ENCODE measurements at regions of chr3 and their contacts with region 1.

Region 1: DNA sequence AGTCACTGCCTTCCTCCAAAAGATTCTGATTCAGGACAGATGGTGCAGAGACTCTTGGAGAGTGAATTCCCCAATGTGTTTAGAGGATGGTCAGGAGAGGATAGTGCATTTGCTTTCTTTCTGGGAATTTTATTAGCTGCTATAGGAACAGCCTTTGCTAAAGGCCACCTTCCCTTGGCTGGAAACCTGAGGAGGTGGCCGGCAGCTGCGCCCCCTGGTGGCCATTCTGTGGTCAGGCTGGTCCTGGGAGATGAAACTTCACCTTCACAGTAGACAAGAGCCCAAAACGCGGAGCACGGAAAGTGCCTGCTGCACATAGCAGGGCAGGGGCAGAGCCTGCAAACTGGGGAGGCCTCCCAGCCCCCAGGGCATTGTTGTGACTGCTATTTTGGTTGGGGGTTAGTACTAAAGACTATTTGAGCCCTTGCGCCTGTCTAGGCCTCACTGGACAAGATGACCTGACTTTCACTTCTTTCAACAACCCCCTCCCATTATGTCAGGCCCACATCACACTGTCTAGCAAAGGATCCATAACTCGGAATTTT is 34.3 kb downstream of the SEC22C start:
- DNase-seq: peak in 1 of 2 donors; percentile 45
- ATAC-seq: peak; percentile 48 to 82
- H3K4me3 ChIP-seq: no peak overlapping the region
- H3K27ac ChIP-seq: peak overlapping the region in 3 of 4 donors; percentile 20 to 48 (median 47)
- H3K4me1 ChIP-seq: peaks cover 0 to 5% of the 10 kb centered on the region in 2 donors
- H3K27me3 ChIP-seq: no peaks in the 10 kb centered on the region
- CTCF ChIP-seq: peak; percentile 63 to 97 (median 84)
- POLR2A ChIP-seq: no peak

Region 2: DNA sequence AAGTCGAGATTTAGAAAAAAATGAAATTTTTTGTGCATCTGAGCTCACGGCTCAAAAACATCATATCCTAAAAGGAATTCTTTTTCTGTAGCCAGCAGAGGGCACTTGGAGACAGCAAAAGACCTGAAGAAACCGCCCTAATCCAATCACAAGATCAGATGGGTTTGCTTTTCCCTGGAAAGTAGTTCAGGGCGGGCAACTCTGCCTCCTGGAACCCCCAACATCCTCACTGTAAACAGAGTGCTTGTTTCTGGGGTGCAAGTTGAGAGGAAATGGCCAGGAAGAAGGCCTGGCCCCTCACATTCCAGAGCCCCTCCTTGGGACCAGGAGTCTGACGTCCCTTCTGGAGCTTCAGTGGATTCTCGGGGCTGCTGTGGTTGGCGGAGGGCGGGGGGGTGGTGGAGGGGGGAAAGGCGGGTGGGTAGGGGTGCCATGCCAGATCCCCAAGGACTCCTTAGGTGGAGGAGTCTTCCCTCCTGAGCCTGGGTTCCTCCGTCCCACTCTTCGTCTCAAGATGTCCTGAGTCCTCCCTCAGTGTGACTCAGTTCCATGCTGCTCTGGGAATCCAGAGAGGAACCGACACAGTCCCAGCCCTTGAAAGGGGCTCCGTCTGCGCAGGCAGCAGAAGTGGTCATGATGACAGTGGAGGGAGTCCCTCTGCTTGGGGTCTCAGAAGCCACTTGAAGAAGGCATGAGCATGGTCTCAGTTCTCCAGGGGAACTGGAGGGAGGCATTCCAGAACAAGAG is 317.4 kb before region 1 on chr3:
- in situ Hi-C with region 1: loop called (anchors 5 to 25 kb)
- intact Hi-C with region 1: no loop called
- DNase-seq: no peak
- ATAC-seq: no peak
- H3K4me3 ChIP-seq: no peak overlapping the region
- H3K27ac ChIP-seq: no peak overlapping the region
- H3K4me1 ChIP-seq: peaks cover 18 to 20% of the 10 kb centered on the region in 2 donors
- H3K27me3 ChIP-seq: no peaks in the 10 kb centered on the region
- CTCF ChIP-seq: peak; percentile 38 to 61 (median 58)
- POLR2A ChIP-seq: no peak

Region 3: GRCh38 chr3:42236611-42237010 is 310.9 kb before region 1 on chr3:
- in situ Hi-C with region 1: loop called in 3 of 4 experiments (anchors 5 to 25 kb)
- intact Hi-C with region 1: no loop called
- DNase-seq: no peak
- ATAC-seq: no peak
- H3K4me3 ChIP-seq: no peak overlapping the region
- H3K27ac ChIP-seq: no peak overlapping the region
- H3K4me1 ChIP-seq: no peaks in the 10 kb centered on the region
- H3K27me3 ChIP-seq: no peaks in the 10 kb centered on the region
- CTCF ChIP-seq: no peak
- POLR2A ChIP-seq: no peak

Region 4: GRCh38 chr3:42247576-42248027 is 299.9 kb before region 1 on chr3:
- in situ Hi-C with region 1: loop called in 2 of 4 experiments (anchors 25 kb)
- intact Hi-C with region 1: no loop called
- DNase-seq: peak in 1 of 2 donors; percentile 30
- ATAC-seq: peak in 1 of 2 donors; percentile 58
- H3K4me3 ChIP-seq: no peak overlapping the region
- H3K27ac ChIP-seq: no peak overlapping the region
- H3K4me1 ChIP-seq: no peaks in the 10 kb centered on the region
- H3K27me3 ChIP-seq: no peaks in the 10 kb centered on the region
- CTCF ChIP-seq: peak; percentile 29 to 63 (median 60)
- POLR2A ChIP-seq: no peak

Region 5: DNA sequence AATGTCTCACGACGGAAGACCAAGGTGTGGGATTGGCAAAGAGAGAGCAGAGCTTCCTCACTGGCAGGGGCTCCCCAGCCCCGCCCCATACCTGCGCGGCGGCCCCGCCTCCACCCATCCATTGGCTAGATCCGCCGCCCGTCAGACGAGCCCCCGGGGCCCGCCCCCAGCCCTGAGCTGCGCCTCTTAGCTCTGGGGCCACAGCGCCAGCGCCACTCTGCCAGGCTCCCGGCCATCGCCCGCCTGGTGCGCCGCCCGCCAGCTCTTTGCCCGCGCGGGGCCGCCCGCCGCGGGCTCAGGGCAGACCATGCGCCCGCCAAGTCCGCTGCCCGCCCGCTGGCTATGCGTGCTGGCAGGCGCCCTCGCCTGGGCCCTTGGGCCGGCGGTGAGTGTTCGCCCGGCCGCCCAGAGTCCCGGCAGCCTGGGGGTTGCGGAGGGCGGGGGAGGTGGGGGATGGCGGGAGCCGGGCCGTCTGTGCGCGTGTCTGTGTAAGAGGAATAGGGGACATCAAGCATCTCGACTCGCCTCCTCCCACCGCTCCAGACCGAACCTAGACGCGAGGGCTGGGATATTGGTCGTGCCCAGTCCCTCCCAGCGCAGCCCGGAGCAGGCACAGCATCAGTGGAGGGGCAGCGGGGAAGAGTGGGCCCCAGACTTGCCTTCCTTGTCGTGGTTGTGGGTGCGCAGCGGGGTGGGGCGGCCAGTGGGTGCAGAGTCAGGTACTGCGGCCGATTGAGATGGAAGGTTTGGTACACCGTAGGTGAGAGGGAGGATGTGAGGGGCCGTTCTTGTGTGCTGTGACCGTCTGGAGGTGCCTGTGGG is 44.8 kb before region 1 on chr3 and contains the start of gene VIPR1:
- in situ Hi-C with region 1: no loop called
- intact Hi-C with region 1: loop called (anchors 5 kb)
- DNase-seq: peak in 1 of 2 donors; percentile 41
- ATAC-seq: peak in 1 of 2 donors; percentile 55
- H3K4me3 ChIP-seq: peak within 1 kb of the TSS; percentile 38 to 57 (median 48)
- H3K27ac ChIP-seq: peak within 1 kb of the TSS in 2 of 4 donors; percentile 4 to 15
- H3K4me1 ChIP-seq: peaks cover 9 to 16% of the 10 kb centered on the region in 2 donors
- H3K27me3 ChIP-seq: peaks cover 20 to 27% (median 25%) of the 10 kb centered on the region in 3 donors
- CTCF ChIP-seq: no peak
- POLR2A ChIP-seq: no peak
- total RNA-seq, gene VIPR1: 1.7 to 8.7 (median 3.2) TPM

Measured in gastrocnemius medialis (tissue), 4 donors.